ENCODE measurements at regions of chr6 and their contacts with region 1.

Region 1: GRCh38 chr6:6741224-6741623 is 152.7 kb downstream of the LY86 start:
- DNase-seq: no peak
- H3K4me3 ChIP-seq: no peak overlapping the region
- H3K27ac ChIP-seq: no peak overlapping the region
- H3K4me1 ChIP-seq: peaks cover 5% of the 10 kb centered on the region
- H3K27me3 ChIP-seq: no peaks in the 10 kb centered on the region
- CTCF ChIP-seq: no peak

Region 2: GRCh38 chr6:6775074-6775473 is 33.9 kb after region 1 on chr6:
- CTCF ChIA-PET with region 1: no interaction called
- dilution Hi-C with region 1: loop called (anchors 5 kb)
- in situ Hi-C with region 1: no loop called
- intact Hi-C with region 1: no loop called
- DNase-seq: no peak
- H3K4me3 ChIP-seq: no peak overlapping the region
- H3K27ac ChIP-seq: no peak overlapping the region
- H3K4me1 ChIP-seq: no peaks in the 10 kb centered on the region
- H3K27me3 ChIP-seq: no peaks in the 10 kb centered on the region
- CTCF ChIP-seq: no peak

Region 3: DNA sequence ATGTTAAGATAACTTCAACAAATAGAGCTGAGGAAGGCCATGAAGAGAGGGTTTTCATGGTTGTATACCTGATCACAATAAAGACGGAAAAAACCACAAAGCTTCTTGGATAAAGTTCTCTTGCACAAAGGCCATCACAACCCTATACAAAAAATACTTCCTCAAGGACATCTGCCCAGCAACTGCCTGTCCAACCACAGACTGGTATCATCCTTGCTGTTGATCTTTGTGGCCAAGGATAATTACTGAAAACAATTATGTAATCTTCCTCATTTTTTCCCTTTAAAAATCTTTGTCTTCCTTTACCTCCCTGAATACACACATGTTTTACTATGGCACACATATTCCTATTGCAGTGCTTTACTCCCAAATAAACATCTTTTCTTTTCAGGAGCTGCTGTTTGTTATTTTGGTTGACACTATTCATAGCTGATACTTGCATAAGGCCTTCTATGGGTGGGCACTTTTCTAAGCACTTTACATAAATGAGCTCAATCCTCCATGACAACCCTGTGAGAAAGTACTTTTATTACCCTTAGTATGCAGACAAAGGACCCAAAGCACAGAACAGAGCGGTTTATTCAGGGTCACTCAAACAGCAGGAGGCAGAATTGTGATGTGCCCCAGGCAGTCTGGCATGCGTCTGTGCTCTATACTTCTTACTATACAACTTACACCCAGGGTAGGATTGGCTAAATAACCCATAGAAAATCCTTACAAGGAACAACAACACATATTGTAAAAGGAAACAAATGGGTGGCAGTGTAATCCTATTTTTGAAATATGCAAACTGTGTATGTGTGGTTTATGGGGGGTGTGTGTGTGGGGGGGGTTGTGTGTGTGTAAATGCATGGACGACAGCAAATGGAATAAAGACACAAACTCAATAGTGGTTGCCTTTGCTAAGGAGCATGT is 883.8 kb after region 1 on chr6:
- CTCF ChIA-PET with region 1: interaction called, 33 read pairs
- dilution Hi-C with region 1: no loop called
- in situ Hi-C with region 1: no loop called
- intact Hi-C with region 1: no loop called
- DNase-seq: no peak
- H3K4me3 ChIP-seq: no peak overlapping the region
- H3K27ac ChIP-seq: no peak overlapping the region
- H3K4me1 ChIP-seq: no peaks in the 10 kb centered on the region
- H3K27me3 ChIP-seq: no peaks in the 10 kb centered on the region
- CTCF ChIP-seq: peak in 1 of 2 donors; percentile 16

Measured in mammary epithelial cell (primary cell).